WTC11 (cell line): ENCODE measurements at regions of chr5 and their contacts with region 1.

Region 1: GRCh38 chr5:138035605-138036537 is 3.0 kb upstream of the FAM13B start:
- DNase-seq: peak; percentile 62
- ATAC-seq: peak; percentile 57
- H3K4me3 Mint-ChIP-seq: no peak overlapping the region
- H3K27ac Mint-ChIP-seq: no peak overlapping the region
- H3K4me1 Mint-ChIP-seq: peaks cover 25% of the 10 kb centered on the region
- H3K27me3 Mint-ChIP-seq: no peaks in the 10 kb centered on the region
- CTCF ChIP-seq: peak; percentile 59

Region 2: GRCh38 chr5:138025285-138025684 is 10.6 kb before region 1 on chr5:
- CTCF ChIA-PET with region 1: interaction called, 14 read pairs
- POLR2A ChIA-PET with region 1: no interaction called
- DNase-seq: no peak
- ATAC-seq: no peak
- H3K4me3 Mint-ChIP-seq: no peak overlapping the region
- H3K27ac Mint-ChIP-seq: no peak overlapping the region
- H3K4me1 Mint-ChIP-seq: peaks cover 39% of the 10 kb centered on the region
- H3K27me3 Mint-ChIP-seq: no peaks in the 10 kb centered on the region
- CTCF ChIP-seq: no peak

Region 3: DNA sequence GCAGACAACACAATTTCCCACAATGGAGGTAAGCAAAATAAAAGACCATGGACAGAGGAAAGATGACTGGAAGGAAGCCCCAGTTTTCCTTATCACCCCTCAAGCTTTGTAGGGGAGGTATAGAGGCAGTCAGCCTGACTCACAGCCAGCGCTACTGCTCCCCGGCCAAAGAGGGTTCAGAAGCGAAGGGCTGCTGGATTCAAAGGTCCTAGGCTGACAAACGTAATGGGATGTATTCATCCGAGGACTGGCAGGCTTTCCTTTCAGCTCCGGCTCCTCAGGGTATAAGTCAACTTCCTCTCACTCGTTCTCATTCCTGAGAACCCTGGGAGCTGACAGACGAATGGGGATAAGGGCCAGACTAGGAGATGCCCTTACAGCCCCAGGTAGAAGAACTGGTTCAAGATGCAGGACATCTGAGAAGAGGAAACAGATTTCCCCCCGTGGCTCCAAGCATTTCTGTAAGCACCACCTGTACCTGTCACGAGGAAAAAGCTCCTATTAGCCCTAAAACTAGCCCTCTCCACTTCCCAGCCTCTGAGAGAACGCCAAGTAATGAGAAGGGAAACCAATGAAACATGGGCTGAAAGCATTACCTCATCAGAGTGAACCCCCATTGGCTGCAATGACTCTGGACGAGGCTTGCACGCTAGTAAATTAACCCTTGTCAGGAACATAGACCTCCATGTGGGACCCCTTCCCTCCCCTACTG is 19.1 kb after region 1 on chr5:
- CTCF ChIA-PET with region 1: interaction called, 25 read pairs
- POLR2A ChIA-PET with region 1: interaction called, 3 read pairs
- DNase-seq: no peak
- ATAC-seq: peak; percentile 92
- H3K4me3 Mint-ChIP-seq: peak overlapping the region; percentile 58
- H3K27ac Mint-ChIP-seq: no peak overlapping the region
- H3K4me1 Mint-ChIP-seq: peaks cover 5% of the 10 kb centered on the region; the same call in 1 of the 2 replicates
- H3K27me3 Mint-ChIP-seq: peaks cover 5% of the 10 kb centered on the region; the same call in 1 of the 2 replicates
- CTCF ChIP-seq: no peak

Region 4: GRCh38 chr5:138065102-138065501 is 29.2 kb after region 1 on chr5:
- CTCF ChIA-PET with region 1: interaction called, 74 read pairs
- POLR2A ChIA-PET with region 1: interaction called, 4 read pairs
- DNase-seq: peak; percentile 66
- ATAC-seq: peak; percentile 91
- H3K4me3 Mint-ChIP-seq: no peak overlapping the region
- H3K27ac Mint-ChIP-seq: no peak overlapping the region
- H3K4me1 Mint-ChIP-seq: peaks cover 2% of the 10 kb centered on the region; the same call in 1 of the 2 replicates
- H3K27me3 Mint-ChIP-seq: peaks cover 4% of the 10 kb centered on the region; the same call in 1 of the 2 replicates
- CTCF ChIP-seq: peak; percentile 31; the same call in 1 of the 2 replicates